ENCODE measurements at regions of chr1 and their contacts with region 1.

Region 1: GRCh38 chr1:226332947-226333346 is 24.0 kb upstream of the LIN9 start:
- DNase-seq: no peak
- ATAC-seq: no peak
- H3K4me3 Mint-ChIP-seq: peak overlapping the region; percentile 37
- H3K27ac Mint-ChIP-seq: no peak overlapping the region
- H3K4me1 Mint-ChIP-seq: peaks cover 10% of the 10 kb centered on the region
- H3K27me3 Mint-ChIP-seq: no peaks in the 10 kb centered on the region
- CTCF ChIP-seq: no peak

Region 2: DNA sequence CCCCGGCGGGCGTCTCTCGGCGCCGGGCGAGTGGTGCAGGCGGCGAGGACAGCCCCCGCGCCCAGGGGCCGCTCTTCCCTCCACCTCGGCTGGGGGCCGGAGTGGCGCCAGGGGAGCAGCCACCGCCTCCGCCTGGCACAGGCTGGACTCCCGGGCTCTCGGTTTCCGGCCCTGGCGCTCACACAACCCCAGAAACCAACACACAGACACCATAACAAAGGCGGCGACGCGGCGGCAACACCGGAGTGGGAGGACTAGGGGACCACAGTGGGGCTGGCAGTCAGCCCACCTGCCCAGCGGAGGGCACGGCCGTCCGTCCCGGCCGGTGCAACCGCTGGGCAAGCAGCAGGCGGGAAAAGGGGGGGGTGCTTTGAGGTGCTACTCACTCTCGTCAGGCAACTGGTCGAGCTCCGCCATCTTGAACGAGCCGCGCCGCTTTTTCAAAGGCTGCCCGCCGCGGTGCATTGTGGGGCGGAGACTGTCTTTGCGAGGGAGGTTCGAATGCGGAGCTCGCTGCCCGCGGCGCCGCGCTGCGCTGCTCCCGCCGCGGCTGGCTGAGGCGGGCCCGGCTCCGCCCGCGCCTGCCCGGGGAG is 24.1 kb before region 1 on chr1 and contains the start of gene LIN9:
- CTCF ChIA-PET with region 1: interaction called, 38 read pairs
- POLR2A ChIA-PET with region 1: interaction called, 3 read pairs
- intact Hi-C with region 1: no loop called
- DNase-seq: peak; percentile 96
- ATAC-seq: peak; percentile 91
- H3K4me3 Mint-ChIP-seq: peak within 1 kb of the TSS; percentile 88
- H3K27ac Mint-ChIP-seq: peak within 1 kb of the TSS; percentile 90
- H3K4me1 Mint-ChIP-seq: peaks cover 22% of the 10 kb centered on the region
- H3K27me3 Mint-ChIP-seq: peaks cover 14% of the 10 kb centered on the region
- CTCF ChIP-seq: no peak
- total RNA-seq, gene LIN9: 10.2 to 11.3 TPM

Region 3: GRCh38 chr1:226397955-226398636 is 65.1 kb after region 1 on chr1:
- CTCF ChIA-PET with region 1: no interaction called
- POLR2A ChIA-PET with region 1: no interaction called
- intact Hi-C with region 1: no loop called
- DNase-seq: no peak
- ATAC-seq: no peak
- H3K4me3 Mint-ChIP-seq: no peak overlapping the region
- H3K27ac Mint-ChIP-seq: no peak overlapping the region
- H3K4me1 Mint-ChIP-seq: peaks cover 36% of the 10 kb centered on the region
- H3K27me3 Mint-ChIP-seq: no peaks in the 10 kb centered on the region
- CTCF ChIP-seq: no peak

Measured in activated CD8-positive, alpha-beta T cell treated with anti-CD3 and anti-CD28 coated beads for 36 hours (primary cell).